Heart left ventricle (tissue), 16 donors: ENCODE measurements at regions of chr9 and their contacts with region 1.

Region 1: DNA sequence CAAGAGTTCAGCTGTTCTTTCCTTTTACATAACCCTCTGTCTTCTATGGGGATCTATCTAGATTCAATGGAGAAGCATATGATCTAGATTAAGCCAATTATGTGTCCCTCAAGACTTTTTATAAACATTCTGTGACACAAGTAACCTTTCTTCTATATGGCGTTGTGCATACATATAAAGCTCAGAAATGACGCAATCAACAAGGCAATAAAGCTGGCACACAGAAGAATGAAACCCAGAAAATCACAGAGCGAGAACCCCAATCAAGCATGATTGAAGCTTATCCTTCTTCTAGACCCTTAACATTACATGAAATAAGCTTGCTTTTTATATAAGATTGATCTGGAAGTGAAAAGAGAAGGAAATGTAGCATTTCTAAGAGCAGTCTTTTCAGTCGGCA is 178.9 kb downstream of the DMRTA1 start:
- DNase-seq: no peak
- ATAC-seq: no peak
- H3K4me3 ChIP-seq: no peak overlapping the region
- H3K27ac ChIP-seq: no peak overlapping the region
- H3K4me1 ChIP-seq: no peaks in the 10 kb centered on the region
- H3K27me3 ChIP-seq: no peaks in the 10 kb centered on the region
- CTCF ChIP-seq: no peak
- POLR2A ChIP-seq: no peak

Region 2: DNA sequence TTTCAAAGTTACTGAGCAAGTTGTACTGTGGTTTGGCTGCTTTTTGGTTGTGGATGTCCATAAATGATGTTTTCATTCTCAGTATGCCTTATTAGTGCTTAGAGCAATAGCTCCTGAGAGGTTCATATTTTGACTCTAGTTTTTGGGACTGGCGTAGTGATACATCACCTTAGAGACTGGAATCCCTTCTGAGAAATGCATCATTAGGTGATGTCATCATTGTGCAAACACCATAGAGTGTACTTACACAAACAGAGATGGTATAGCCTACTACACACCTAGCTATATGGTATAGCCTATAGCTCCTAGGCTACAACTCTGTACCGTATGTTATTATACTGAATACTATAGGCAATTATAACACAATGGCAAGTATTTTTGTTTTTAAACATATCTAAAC is 85.7 kb before region 1 on chr9:
- intact Hi-C with region 1: no loop called
- DNase-seq: no peak
- ATAC-seq: no peak
- H3K4me3 ChIP-seq: no peak overlapping the region
- H3K27ac ChIP-seq: no peak overlapping the region
- H3K4me1 ChIP-seq: no peaks in the 10 kb centered on the region
- H3K27me3 ChIP-seq: no peaks in the 10 kb centered on the region
- CTCF ChIP-seq: no peak
- POLR2A ChIP-seq: no peak

Region 3: GRCh38 chr9:22590336-22591033 is 35.1 kb before region 1 on chr9:
- intact Hi-C with region 1: no loop called
- DNase-seq: no peak
- ATAC-seq: no peak
- H3K4me3 ChIP-seq: no peak overlapping the region
- H3K27ac ChIP-seq: no peak overlapping the region
- H3K4me1 ChIP-seq: no peaks in the 10 kb centered on the region
- H3K27me3 ChIP-seq: no peaks in the 10 kb centered on the region
- CTCF ChIP-seq: no peak
- POLR2A ChIP-seq: no peak

Region 4: DNA sequence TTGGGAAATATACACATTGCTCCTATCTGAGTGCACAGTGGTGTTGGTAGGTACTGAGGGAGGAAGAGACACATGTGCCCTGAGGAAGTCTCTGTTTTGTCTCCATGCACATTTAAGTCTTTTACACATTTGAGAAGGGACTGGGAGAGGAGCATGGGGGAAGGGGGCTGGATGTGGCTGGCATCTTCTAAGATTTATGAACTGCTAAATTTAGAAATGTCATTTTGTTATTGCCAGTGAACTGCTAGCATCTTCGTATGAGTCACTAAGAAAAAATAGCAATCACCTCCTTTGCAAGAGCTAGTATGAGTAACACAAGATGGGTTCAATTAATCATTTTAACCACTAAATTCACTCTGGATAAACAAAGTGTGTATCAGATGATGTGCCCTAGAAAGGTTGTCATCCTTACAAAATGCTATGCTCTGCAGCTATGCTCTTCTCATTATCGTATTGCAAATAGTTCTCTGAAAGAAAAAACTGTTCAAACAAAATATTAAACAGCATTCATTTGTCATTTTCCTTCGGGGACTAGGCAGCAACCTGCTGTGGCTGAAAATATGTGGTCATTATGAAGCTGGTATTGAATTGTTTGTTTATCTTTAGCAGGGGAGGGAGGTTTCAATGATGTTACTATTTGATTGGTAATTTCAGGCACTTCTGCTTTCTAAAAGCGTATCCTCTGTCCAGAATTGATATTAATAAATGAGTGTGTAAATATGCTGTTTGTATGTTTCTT is 57.6 kb after region 1 on chr9:
- intact Hi-C with region 1: loop called in 1 of 10 experiments (anchors 5 kb)
- DNase-seq: no peak
- ATAC-seq: no peak
- H3K4me3 ChIP-seq: no peak overlapping the region
- H3K27ac ChIP-seq: no peak overlapping the region
- H3K4me1 ChIP-seq: no peaks in the 10 kb centered on the region
- H3K27me3 ChIP-seq: no peaks in the 10 kb centered on the region
- CTCF ChIP-seq: no peak
- POLR2A ChIP-seq: no peak